ENCODE measurements at regions of chr1 and their contacts with region 1.

Region 1: GRCh38 chr1:233295975-233296322 is 424 bp upstream of the PCNX2 start:
- DNase-seq: no peak
- ATAC-seq: no peak
- H3K4me3 ChIP-seq: peak overlapping the region in 7 of 12 donors; percentile 48 to 72 (median 63)
- H3K27ac ChIP-seq: no peak overlapping the region
- H3K4me1 ChIP-seq: peaks cover 0 to 12% (median 7%) of the 10 kb centered on the region in 12 donors
- H3K27me3 ChIP-seq: peaks cover 0 to 36% (median 9%) of the 10 kb centered on the region in 9 donors
- CTCF ChIP-seq: no peak
- POLR2A ChIP-seq: no peak

Region 2: GRCh38 chr1:233315718-233316301 is 19.9 kb after region 1 on chr1:
- intact Hi-C with region 1: loop called in 1 of 10 experiments (anchors 2 kb)
- DNase-seq: no peak
- ATAC-seq: no peak
- H3K4me3 ChIP-seq: no peak overlapping the region
- H3K27ac ChIP-seq: no peak overlapping the region
- H3K4me1 ChIP-seq: no peaks in the 10 kb centered on the region
- H3K27me3 ChIP-seq: peaks cover 0 to 11% (median 0%) of the 10 kb centered on the region in 9 donors
- CTCF ChIP-seq: no peak
- POLR2A ChIP-seq: no peak

Region 3: GRCh38 chr1:233635765-233636502 is 340.0 kb after region 1 on chr1:
- intact Hi-C with region 1: no loop called
- DNase-seq: no peak
- ATAC-seq: no peak
- H3K4me3 ChIP-seq: no peak overlapping the region
- H3K27ac ChIP-seq: no peak overlapping the region
- H3K4me1 ChIP-seq: no peaks in the 10 kb centered on the region
- H3K27me3 ChIP-seq: no peaks in the 10 kb centered on the region
- CTCF ChIP-seq: no peak
- POLR2A ChIP-seq: no peak